ENCODE measurements at regions of chr7 and their contacts with region 1.

Region 1: DNA sequence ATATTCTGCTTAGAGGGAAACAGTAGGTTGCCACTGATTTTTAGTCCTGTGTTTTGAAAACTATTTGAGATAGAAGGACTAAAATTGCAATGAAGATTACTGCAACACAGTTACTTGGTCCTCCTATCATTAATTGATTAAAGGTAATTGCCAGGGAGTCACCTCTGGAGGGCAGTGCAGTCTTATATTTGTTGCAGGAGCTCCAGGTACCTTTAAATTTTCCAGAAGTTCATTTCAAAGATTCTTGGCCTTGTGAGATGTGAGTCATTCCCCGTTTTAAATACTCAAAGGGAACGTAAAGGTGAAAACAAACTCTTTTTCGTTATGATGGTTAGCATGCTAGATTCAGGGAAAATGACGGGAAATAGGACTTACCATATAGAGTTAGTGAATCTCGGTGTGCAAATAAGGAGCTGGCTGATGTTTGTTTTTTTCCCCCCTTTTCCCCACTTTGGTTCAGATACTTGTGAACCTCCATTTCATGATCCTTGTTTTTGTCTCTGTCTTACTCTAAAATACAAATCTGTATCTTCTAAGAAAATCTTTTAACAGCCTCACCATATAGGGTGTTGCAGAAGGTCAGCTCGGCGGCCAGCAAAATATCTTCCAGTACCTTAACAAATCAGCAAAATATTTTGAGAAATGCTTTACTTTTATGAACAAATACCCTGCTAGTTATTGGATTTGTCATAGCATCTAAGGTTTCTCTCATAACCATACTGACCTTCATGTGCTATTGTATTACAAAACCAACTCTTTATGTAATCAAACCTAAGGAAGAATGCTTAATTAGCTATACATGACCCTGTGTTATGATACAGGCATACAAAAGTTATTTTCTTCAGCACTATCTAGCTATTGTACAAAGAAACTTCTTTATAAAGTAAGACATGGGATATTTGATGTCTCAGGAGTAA is 143.0 kb upstream of the HDAC9 start:
- DNase-seq: no peak
- ATAC-seq: peak; percentile 73
- H3K4me3 Mint-ChIP-seq: no peak overlapping the region
- H3K27ac Mint-ChIP-seq: no peak overlapping the region
- H3K4me1 Mint-ChIP-seq: peaks cover 28% of the 10 kb centered on the region
- H3K27me3 Mint-ChIP-seq: no peaks in the 10 kb centered on the region
- CTCF ChIP-seq: peak; percentile 81

Region 2: DNA sequence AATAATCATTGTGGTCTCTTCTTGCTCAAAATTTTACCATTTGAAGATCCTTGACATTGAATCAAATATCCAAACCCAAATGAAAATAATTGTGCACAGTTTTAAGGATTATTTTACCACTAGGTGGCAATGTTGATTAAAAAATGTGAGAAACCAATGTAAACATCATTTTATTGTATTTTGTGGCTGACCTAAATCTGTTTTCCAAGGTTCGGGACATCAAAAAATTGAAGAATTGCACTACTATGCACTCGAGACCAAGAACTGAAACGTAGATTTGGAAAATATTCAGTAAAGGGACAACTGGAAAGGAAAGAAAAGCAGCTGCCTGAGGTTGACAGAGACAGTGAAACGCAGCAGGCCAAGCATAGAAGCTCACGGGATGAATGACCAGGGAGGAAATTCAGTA is 671.6 kb before region 1 on chr7:
- CTCF ChIA-PET with region 1: interaction called, 14 read pairs
- POLR2A ChIA-PET with region 1: no interaction called
- intact Hi-C with region 1: no loop called
- DNase-seq: no peak
- ATAC-seq: no peak
- H3K4me3 Mint-ChIP-seq: no peak overlapping the region
- H3K27ac Mint-ChIP-seq: no peak overlapping the region
- H3K4me1 Mint-ChIP-seq: no peaks in the 10 kb centered on the region
- H3K27me3 Mint-ChIP-seq: no peaks in the 10 kb centered on the region
- CTCF ChIP-seq: no peak

Region 3: GRCh38 chr7:18495412-18496340 is 143.1 kb after region 1 on chr7 and contains the start of gene HDAC9:
- CTCF ChIA-PET with region 1: interaction called, 24 read pairs
- POLR2A ChIA-PET with region 1: interaction called, 5 read pairs
- intact Hi-C with region 1: loop called (anchors 2 kb)
- DNase-seq: peak; percentile 33
- ATAC-seq: peak; percentile 88
- H3K4me3 Mint-ChIP-seq: peak within 1 kb of the TSS; percentile 95
- H3K27ac Mint-ChIP-seq: peak within 1 kb of the TSS; percentile 95
- H3K4me1 Mint-ChIP-seq: peaks cover 53% of the 10 kb centered on the region
- H3K27me3 Mint-ChIP-seq: no peaks in the 10 kb centered on the region
- CTCF ChIP-seq: no peak
- total RNA-seq, gene HDAC9: 136 and 149 TPM in 2 replicates

Region 4: GRCh38 chr7:18610331-18610948 is 257.8 kb after region 1 on chr7:
- CTCF ChIA-PET with region 1: interaction called, 27 read pairs
- POLR2A ChIA-PET with region 1: interaction called, 3 read pairs
- intact Hi-C with region 1: loop called (anchors 1 kb)
- DNase-seq: no peak
- ATAC-seq: peak; percentile 37
- H3K4me3 Mint-ChIP-seq: no peak overlapping the region
- H3K27ac Mint-ChIP-seq: no peak overlapping the region
- H3K4me1 Mint-ChIP-seq: peaks cover 4% of the 10 kb centered on the region
- H3K27me3 Mint-ChIP-seq: no peaks in the 10 kb centered on the region
- CTCF ChIP-seq: no peak

Region 5: GRCh38 chr7:19107356-19108146 is 755.0 kb after region 1 on chr7:
- CTCF ChIA-PET with region 1: no interaction called
- POLR2A ChIA-PET with region 1: no interaction called
- intact Hi-C with region 1: loop called (anchors 5 kb)
- DNase-seq: no peak
- ATAC-seq: no peak
- H3K4me3 Mint-ChIP-seq: peak overlapping the region; percentile 55
- H3K27ac Mint-ChIP-seq: no peak overlapping the region
- H3K4me1 Mint-ChIP-seq: peaks cover 35% of the 10 kb centered on the region
- H3K27me3 Mint-ChIP-seq: peaks cover 81% of the 10 kb centered on the region
- CTCF ChIP-seq: no peak

Region 6: DNA sequence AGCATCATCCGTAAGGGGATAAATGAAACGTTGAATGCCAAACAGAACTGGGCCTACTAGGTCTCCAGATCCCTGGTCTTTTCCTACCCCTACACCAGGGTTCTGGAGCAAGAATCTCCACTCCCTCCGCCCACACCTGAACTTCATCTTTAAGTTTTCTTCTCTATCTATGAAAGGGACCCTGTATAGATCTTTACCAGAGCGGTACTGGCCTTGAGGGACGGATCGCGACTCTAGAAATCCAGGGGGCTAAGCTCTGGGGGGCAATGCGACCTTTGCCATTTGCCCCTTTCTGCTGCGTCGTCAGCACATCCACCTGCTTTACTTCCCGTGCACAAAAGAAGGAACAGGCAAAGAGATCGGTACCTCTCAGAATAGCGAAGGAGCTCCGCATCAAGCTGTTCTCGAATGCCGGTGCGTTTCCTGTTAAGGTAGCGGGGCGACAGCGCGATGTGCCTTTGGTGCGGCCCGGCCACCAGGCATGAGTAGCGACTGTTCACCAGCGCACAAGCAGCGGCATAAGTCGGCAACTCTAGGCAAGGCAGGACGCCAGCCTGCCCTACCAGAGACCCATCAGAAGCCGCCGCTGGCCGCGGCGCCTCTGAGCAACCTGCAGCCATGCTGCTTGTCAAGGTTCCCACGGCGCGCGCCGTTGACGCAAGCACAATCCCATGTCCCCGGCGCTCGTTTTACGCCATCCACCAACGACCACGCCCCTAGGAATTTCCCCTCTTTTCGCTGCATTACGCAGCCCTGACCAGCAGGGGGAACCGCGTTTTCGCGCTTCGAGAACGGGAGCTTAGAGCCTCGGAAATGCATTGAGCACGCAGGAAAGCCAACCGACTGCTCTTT is 1356.0 kb after region 1 on chr7 and contains the start of gene POLR1F:
- CTCF ChIA-PET with region 1: interaction called, 3 read pairs
- POLR2A ChIA-PET with region 1: no interaction called
- intact Hi-C with region 1: loop called (anchors 2 kb)
- DNase-seq: peak; percentile 83
- ATAC-seq: peak; percentile 98
- H3K4me3 Mint-ChIP-seq: peak within 1 kb of the TSS; percentile 97
- H3K27ac Mint-ChIP-seq: peak within 1 kb of the TSS; percentile 88
- H3K4me1 Mint-ChIP-seq: peaks cover 43% of the 10 kb centered on the region
- H3K27me3 Mint-ChIP-seq: peaks cover 4% of the 10 kb centered on the region
- CTCF ChIP-seq: no peak
- total RNA-seq, gene POLR1F: 19.9 and 20.0 TPM in 2 replicates